ENCODE measurements at regions of chr5 and their contacts with region 1.

Region 1: DNA sequence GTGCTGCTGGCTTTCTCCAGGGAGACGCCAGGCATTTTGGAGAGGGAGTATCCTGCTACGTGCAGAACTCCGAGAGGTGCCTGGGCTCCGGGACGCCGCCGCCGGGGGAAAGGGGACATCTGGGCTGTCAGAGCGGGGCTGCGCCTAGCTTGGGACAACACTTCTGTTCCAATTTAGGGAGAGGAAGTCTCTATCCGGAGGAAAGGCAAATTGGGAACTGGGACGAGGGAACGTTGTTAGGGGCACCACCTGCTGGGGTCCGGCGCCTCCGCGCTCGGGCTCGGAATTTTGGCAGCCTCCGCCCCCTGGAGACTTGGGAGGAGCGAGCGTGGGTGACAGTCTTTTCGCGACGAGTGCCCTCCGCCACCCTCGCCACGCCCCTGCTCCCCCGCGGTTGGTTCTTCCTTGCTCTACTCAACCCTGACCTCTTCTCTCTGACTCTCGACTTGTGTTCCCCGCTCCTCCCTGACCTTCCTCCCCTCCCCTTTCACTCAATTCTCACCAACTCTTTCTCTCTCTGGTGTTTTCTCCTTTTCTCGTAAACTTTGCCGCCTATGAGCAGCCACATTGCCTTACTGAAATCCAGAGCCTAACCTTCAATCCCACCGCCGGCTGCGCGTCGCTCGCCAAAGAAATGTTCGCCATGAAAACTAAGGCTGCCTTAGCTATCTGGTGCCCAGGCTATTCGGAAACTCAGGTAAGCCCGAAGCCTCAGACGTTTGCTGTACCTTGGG is 1.6 kb downstream of the TSLP start:
- DNase-seq: peak; percentile 28
- ATAC-seq: peak; percentile 81
- H3K4me3 ChIP-seq: peak overlapping the region; percentile 53
- H3K27ac ChIP-seq: peak overlapping the region; percentile 21
- H3K4me1 ChIP-seq: peaks cover 12% of the 10 kb centered on the region
- H3K27me3 ChIP-seq: no peaks in the 10 kb centered on the region
- CTCF ChIP-seq: no peak
- POLR2A ChIP-seq: no peak
- RAD21 ChIP-seq: peak; percentile 16; the same call in 1 of the 2 replicates

Region 2: GRCh38 chr5:110463106-110463505 is 610.0 kb before region 1 on chr5:
- CTCF ChIA-PET with region 1: no interaction called
- POLR2A ChIA-PET with region 1: no interaction called
- dilution Hi-C with region 1: no loop called
- in situ Hi-C with region 1: no loop called
- intact Hi-C with region 1: no loop called
- DNase-seq: peak; percentile 6
- ATAC-seq: no peak
- H3K4me3 ChIP-seq: no peak overlapping the region
- H3K27ac ChIP-seq: no peak overlapping the region
- H3K4me1 ChIP-seq: no peaks in the 10 kb centered on the region; the same call in 1 of the 2 replicates
- H3K27me3 ChIP-seq: no peaks in the 10 kb centered on the region
- CTCF ChIP-seq: no peak
- POLR2A ChIP-seq: no peak
- RAD21 ChIP-seq: no peak

Region 3: GRCh38 chr5:110790673-110791072 is 282.4 kb before region 1 on chr5:
- CTCF ChIA-PET with region 1: no interaction called
- POLR2A ChIA-PET with region 1: no interaction called
- dilution Hi-C with region 1: no loop called
- in situ Hi-C with region 1: no loop called
- intact Hi-C with region 1: loop called (anchors 2 kb)
- DNase-seq: peak; percentile 82
- ATAC-seq: peak; percentile 88
- H3K4me3 ChIP-seq: no peak overlapping the region
- H3K27ac ChIP-seq: no peak overlapping the region
- H3K4me1 ChIP-seq: no peaks in the 10 kb centered on the region
- H3K27me3 ChIP-seq: no peaks in the 10 kb centered on the region
- CTCF ChIP-seq: peak; percentile 63
- POLR2A ChIP-seq: no peak
- RAD21 ChIP-seq: peak; percentile 59

Region 4: DNA sequence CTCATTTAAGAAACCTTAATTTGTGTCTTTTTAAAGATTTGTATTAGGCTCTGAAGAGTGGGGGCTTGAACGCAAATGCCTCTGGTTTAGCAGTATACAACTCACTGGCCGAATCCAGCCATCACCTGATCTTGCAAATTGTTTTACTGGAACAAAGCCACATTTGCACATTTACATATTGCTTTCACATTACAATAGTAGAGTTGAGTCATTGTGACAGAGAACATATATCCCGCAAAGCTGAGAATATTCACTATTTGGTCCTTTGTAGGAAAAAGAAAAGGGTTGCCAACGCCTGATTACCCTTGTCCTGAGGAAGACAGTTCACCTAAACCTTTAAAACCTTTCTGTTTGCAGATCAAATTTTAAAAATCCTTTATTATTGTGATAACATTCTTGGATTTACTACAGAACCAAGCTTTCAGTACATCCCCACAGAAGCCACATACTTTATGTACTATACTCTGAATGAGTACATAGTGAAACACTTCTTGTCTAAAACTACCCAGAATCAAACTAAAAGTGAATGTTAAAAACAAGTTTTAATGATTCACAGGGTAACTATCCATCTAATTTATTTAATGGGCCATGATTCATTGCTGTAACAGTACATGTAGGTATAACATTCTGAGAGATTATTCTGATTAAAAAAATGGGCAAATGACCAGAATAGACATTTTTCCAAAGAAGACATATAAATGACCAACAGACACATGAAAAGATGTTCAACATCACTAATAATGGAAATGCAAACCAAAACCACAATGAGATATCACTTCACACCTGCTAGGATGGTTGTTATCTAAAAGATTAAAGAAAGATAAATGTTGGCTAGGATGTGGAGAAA is 173.3 kb before region 1 on chr5:
- CTCF ChIA-PET with region 1: no interaction called
- POLR2A ChIA-PET with region 1: no interaction called
- dilution Hi-C with region 1: no loop called
- in situ Hi-C with region 1: no loop called
- intact Hi-C with region 1: loop called (anchors 5 kb)
- DNase-seq: peak; percentile 72
- ATAC-seq: peak; percentile 67
- H3K4me3 ChIP-seq: no peak overlapping the region; the same call in 1 of the 2 replicates
- H3K27ac ChIP-seq: peak overlapping the region; percentile 97
- H3K4me1 ChIP-seq: peaks cover 9% of the 10 kb centered on the region; the same call in 1 of the 2 replicates
- H3K27me3 ChIP-seq: no peaks in the 10 kb centered on the region
- CTCF ChIP-seq: no peak
- POLR2A ChIP-seq: no peak
- RAD21 ChIP-seq: no peak

Region 5: DNA sequence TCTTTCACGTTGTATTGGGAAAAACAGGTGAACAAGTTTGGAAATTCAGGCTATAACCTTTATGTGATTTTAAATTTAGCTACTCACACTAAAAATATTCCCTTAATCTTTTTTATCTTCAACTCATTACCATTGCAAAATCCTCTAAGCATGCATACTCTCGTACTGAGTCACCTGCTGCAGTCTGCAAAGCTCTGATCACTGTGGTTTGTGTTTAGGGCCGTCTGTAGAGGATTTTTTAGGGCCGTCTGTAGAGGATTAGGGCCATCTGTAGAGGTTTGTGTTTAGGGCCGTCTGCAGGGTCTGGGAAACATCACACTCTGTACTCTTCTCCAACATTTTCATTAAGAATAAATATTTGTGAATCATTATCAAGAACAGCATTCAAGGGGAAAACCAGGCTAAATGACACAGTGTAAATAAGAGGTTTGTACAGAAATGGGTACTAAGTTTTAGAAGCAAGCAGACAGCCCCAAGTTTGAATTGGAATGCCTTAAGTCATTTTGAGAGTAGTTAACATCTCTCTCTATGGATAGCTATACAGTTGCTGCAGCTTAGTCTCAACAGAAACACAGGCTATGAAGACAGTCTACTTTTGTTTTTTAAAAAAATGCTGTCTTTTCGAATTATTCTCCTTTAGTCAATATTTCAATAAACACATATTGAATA is 156.6 kb before region 1 on chr5:
- CTCF ChIA-PET with region 1: no interaction called
- POLR2A ChIA-PET with region 1: no interaction called
- dilution Hi-C with region 1: no loop called
- in situ Hi-C with region 1: no loop called
- intact Hi-C with region 1: loop called (anchors 5 kb)
- DNase-seq: peak; percentile 95
- ATAC-seq: peak; percentile 94
- H3K4me3 ChIP-seq: no peak overlapping the region
- H3K27ac ChIP-seq: peak overlapping the region; percentile 83; the same call in 1 of the 2 replicates
- H3K4me1 ChIP-seq: peaks cover 11% of the 10 kb centered on the region
- H3K27me3 ChIP-seq: no peaks in the 10 kb centered on the region
- CTCF ChIP-seq: no peak
- POLR2A ChIP-seq: no peak
- RAD21 ChIP-seq: no peak; the same call in 1 of the 2 replicates

Region 6: DNA sequence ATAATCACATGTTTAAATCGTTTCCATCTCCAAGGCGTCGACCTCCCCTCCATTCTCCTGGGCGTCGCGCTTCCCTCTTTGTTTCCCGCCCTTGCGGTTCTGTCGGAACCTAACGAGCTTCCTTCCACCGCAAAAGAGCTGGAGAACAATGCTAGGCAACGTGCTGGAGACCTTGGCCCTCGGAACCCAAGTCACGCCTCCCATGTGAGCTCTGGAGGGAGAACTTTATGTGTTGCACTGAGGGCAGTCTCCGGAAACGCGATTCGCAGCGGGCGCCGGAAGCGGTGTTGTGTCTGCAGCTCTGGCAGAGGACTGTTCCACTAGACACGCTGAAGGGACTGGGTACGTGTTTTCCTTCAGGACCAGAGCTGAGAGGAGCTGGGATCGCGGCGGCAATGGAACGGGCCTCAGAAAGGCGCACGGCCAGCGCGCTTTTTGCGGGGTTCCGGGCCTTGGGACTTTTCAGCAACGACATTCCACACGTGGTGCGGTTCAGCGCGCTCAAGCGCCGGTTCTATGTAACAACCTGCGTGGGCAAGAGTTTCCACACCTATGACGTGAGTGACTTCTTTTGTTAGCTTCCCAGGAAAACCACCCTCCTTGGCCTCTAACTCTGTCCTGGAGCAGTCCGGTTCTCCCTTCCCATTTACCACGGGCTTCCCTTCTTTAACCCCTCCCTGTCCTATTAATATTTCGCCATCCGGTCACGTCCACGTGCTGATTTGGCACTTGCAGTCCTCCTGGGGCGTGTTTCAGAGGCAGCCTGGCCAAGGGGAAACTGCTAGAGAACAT is 19.1 kb after region 1 on chr5 and contains the start of gene WDR36:
- CTCF ChIA-PET with region 1: no interaction called
- POLR2A ChIA-PET with region 1: no interaction called
- dilution Hi-C with region 1: no loop called
- in situ Hi-C with region 1: no loop called
- intact Hi-C with region 1: loop called (anchors 2 kb)
- DNase-seq: peak; percentile 92
- ATAC-seq: peak; percentile 98
- H3K4me3 ChIP-seq: peak within 1 kb of the TSS; percentile 87
- H3K27ac ChIP-seq: peak within 1 kb of the TSS; percentile 87
- H3K4me1 ChIP-seq: peaks cover 4% of the 10 kb centered on the region; the same call in 1 of the 2 replicates
- H3K27me3 ChIP-seq: no peaks in the 10 kb centered on the region
- CTCF ChIP-seq: no peak
- POLR2A ChIP-seq: peak; percentile 68; the same call in 1 of the 2 replicates
- RAD21 ChIP-seq: 0 out of 2 replicates have a peak, but pooled peaks have one; percentile 16
- total RNA-seq, gene WDR36: 87.8 and 111 TPM in 2 replicates